Activated naive CD4-positive, alpha-beta T cell treated with anti-CD3 and anti-CD28 coated beads for 36 hours (primary cell): ENCODE measurements at regions of chr6 and their contacts with region 1.

Region 1: GRCh38 chr6:127420556-127420955 is 38.6 kb downstream of the KIAA0408 start:
- DNase-seq: peak; percentile 92
- H3K4me3 Mint-ChIP-seq: no peak overlapping the region
- H3K27ac Mint-ChIP-seq: peak overlapping the region; percentile 68
- H3K4me1 Mint-ChIP-seq: peaks cover 26% of the 10 kb centered on the region
- H3K27me3 Mint-ChIP-seq: no peaks in the 10 kb centered on the region

Region 2: DNA sequence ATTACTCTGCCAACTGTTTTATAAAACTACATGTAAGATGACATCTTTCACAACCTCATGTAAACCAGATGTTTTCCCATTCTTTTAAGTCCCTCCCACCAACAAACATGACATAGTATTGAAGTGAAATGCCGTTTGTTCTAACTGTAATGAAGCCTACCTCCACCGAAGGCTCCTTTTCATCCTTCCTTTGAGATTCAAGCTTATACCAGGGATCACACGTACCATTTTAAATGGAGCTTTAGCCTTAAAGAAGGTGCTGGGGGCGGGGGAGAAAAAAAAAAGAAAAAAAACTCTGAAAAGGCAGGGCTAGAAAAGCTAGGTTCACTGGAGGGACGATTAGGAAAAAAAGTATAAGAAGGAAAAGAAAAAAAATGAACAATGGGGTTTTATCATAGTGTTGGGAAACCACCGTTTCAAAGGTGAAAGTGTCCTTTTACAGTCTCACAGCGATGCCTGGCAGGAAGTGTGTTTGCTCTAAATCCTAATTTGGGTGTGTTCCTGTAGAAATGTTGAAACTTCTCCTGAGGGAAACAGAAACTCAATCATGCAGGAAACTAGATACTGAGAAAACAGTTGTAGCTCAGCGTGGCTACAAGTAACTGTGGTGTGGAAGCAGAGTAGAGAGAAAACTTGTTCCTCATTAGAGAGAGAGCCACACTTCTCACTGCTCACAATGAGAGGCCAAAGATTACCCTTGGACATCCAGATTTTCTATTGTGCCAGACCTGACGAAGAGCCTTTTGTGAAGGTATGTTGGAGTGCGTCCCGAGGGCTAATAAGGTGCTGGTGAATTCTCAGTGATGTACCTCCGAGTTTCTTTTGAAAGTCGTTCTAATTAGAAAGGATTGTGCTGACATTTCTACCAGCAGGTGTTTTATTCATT is 1501.6 kb before region 1 on chr6:
- CTCF ChIA-PET with region 1: no interaction called
- intact Hi-C with region 1: loop called (anchors 10 kb)
- DNase-seq: peak; percentile 73
- H3K4me3 Mint-ChIP-seq: peak overlapping the region; percentile 78
- H3K27ac Mint-ChIP-seq: peak overlapping the region; percentile 94
- H3K4me1 Mint-ChIP-seq: peaks cover 33% of the 10 kb centered on the region
- H3K27me3 Mint-ChIP-seq: no peaks in the 10 kb centered on the region

Region 3: DNA sequence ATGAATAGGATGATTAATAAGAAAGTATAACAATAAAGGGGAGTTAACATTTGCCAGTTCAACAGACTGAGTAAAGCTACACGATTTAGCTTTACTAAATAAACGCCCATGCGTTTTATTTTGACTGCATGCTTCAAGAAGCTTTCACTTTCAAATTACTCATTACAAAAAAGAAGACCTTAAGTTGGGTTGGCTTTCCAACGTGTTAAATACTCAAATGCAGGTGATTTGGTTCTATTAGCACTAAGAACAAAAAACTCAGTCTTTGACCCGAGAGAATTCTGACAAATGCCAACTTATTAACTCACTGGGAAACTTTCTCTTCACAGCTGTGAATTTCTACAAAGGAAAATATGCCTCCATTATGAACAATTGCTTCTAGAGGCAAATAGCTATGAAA is 129.1 kb before region 1 on chr6:
- CTCF ChIA-PET with region 1: no interaction called
- intact Hi-C with region 1: loop called (anchors 1 kb)
- DNase-seq: no peak
- H3K4me3 Mint-ChIP-seq: no peak overlapping the region
- H3K27ac Mint-ChIP-seq: no peak overlapping the region
- H3K4me1 Mint-ChIP-seq: peaks cover 47% of the 10 kb centered on the region
- H3K27me3 Mint-ChIP-seq: no peaks in the 10 kb centered on the region

Region 4: GRCh38 chr6:127403636-127404035 is 16.9 kb before region 1 on chr6:
- CTCF ChIA-PET with region 1: interaction called, 3 read pairs
- intact Hi-C with region 1: loop called (anchors 1 kb)
- DNase-seq: peak; percentile 14
- H3K4me3 Mint-ChIP-seq: no peak overlapping the region
- H3K27ac Mint-ChIP-seq: peak overlapping the region; percentile 7
- H3K4me1 Mint-ChIP-seq: peaks cover 12% of the 10 kb centered on the region
- H3K27me3 Mint-ChIP-seq: no peaks in the 10 kb centered on the region

Region 5: GRCh38 chr6:127471379-127472255 is 51.1 kb after region 1 on chr6:
- CTCF ChIA-PET with region 1: no interaction called
- intact Hi-C with region 1: no loop called
- DNase-seq: no peak
- H3K4me3 Mint-ChIP-seq: no peak overlapping the region
- H3K27ac Mint-ChIP-seq: no peak overlapping the region
- H3K4me1 Mint-ChIP-seq: no peaks in the 10 kb centered on the region
- H3K27me3 Mint-ChIP-seq: no peaks in the 10 kb centered on the region

Region 6: DNA sequence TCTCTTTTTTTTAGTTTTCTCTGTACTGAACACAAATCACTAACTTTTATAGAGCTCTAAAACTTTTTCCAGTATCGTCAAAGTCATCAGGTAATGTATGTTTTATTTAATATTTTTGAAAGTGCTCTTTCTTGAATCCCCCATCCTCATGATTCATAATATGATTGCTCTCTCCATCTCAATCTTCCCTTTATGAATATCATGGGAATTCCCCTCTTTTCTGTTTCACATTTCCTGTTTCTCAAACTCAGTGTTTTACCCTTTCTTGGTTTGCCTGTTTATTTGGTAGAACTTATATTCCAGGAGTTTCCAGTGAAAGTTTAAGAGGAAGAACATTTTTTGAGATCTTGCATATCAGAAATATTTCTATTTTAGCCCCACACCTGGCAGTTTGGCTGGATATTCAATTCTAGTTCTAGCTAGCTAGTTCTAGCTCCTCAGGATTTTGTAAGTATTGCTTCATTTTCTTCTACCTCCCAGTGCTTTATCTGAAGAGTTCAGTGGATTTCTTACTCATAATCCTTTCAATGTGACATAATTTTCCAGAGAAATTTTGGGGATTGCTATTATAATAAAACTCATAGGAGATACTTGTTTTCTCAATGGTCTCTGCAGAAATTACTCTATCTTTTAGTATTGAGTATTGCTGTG is 150.3 kb after region 1 on chr6:
- CTCF ChIA-PET with region 1: no interaction called
- intact Hi-C with region 1: loop called (anchors 1 kb)
- DNase-seq: no peak
- H3K4me3 Mint-ChIP-seq: no peak overlapping the region
- H3K27ac Mint-ChIP-seq: no peak overlapping the region
- H3K4me1 Mint-ChIP-seq: peaks cover 19% of the 10 kb centered on the region
- H3K27me3 Mint-ChIP-seq: no peaks in the 10 kb centered on the region

Region 7: DNA sequence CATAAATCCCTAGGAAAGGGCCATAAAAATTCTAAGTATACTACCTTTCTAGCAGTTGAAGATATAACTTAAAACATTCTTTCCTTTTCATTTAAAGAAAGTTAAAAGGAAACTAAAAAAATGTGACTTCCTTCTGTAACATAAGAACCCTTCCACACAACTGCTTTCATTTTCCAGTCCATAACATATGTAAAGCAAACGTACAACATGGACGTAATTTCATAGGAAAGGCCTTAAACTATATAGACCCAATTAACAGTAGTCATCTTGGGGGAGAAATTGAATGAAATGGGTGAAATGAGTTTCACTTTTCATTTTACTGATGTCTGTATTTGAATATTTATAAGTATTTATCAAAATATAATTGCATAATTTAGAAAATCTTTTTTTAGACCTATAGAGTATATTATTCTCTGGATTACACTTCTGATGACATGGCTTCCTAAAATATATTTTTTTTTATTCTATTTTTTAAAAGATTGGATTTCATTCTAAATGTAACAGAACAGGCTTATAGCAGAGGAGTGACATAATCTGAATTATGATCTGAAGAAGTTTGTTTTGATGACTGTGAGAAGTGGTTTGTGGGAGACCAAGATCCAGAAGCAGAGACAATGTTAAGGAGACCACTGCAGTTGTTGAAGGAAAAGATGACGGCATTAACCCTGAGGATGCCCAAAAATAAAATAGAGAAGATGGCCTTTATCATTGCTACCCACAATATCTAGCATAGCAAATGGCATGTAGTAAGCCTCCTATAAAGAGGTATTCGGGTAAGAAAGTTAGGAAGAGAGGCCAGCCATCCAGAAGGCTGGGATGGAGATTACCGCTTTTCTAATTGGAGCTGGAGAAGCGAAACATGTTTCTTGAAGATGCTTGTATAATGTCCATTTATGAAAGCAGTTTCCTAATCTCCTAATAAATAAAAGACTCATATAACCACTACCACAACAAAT is 839.5 kb after region 1 on chr6:
- CTCF ChIA-PET with region 1: no interaction called
- intact Hi-C with region 1: loop called (anchors 1 kb)
- DNase-seq: no peak
- H3K4me3 Mint-ChIP-seq: peak overlapping the region; percentile 60
- H3K27ac Mint-ChIP-seq: peak overlapping the region; percentile 46
- H3K4me1 Mint-ChIP-seq: peaks cover 22% of the 10 kb centered on the region
- H3K27me3 Mint-ChIP-seq: no peaks in the 10 kb centered on the region